ENCODE measurements at regions of chr5 and their contacts with region 1.

Region 1: DNA sequence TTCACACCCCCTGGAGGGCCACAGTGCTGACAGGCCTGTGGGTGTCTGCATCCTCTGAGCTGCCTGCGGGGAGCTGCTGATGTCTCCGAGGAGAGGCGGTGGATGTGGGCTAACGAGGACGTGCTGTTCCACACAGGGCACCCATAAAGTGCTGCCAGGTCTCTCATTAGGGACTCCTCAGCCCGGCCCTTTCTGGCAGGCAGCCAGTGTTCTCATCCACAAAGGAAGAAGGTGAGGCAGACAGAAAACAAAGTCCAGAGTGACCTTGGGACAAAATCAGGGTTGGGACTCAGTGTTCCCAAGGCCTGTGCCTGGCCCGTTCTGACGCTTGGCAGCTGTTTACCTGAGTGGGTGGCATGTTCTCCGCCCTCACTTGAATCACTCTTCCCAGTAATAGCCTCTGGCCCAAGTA is 29.3 kb downstream of the CARTPT start:
- DNase-seq: peak; percentile 80
- ATAC-seq: peak; percentile 72

Region 2: DNA sequence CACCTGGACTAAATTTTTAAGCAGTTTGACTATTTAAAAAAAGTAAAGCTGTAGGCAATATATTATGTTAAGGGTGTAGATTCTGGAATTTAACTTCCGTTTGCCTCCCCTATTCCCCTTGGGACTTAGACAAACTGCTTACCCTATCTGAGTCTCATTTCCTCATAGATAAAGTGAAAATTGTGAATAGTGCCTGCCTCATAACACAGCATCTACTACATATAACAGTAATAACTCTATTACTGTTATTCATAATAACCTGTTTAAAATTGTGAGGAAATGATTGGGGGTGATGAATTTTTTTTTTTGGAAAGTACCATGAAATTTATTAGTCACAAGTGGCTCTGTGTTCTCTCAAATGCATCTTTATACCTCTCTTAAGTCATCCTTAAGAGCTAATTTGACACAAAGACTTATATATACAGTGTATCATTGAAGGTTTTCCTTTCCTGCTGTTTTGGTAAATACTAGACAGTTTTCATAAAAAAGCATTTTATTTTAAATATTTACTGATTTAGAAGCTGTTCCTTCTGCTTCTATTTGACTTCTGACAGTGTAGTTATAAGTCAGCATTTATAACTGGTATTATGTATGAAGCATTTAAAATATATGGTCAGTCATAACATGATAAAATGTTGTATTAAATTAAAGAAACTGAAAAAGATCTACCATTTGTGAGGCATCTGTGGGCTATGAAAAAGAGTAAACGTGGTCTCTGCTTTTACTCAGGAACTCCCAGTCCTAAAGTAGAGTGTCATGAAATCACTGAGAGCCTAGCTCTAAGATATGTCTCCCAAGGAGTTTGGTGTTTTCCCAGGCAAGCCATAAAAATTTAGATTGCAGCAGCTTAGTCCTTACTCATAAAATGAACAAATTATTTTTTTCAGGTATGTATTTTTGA is 114.9 kb before region 1 on chr5:
- intact Hi-C with region 1: loop called (anchors 1 kb)
- DNase-seq: no peak
- ATAC-seq: no peak

Region 3: GRCh38 chr5:71794061-71794695 is 45.8 kb after region 1 on chr5:
- intact Hi-C with region 1: no loop called
- DNase-seq: no peak
- ATAC-seq: no peak

Measured in Right ventricle myocardium inferior (tissue), 1 donor.